ENCODE measurements at regions of chr1 and their contacts with region 1.

Region 1: GRCh38 chr1:59007820-59008598 is 224.2 kb upstream of the JUN start:
- DNase-seq: peak; percentile 53 to 60 (median 57)
- H3K4me3 ChIP-seq: no peak overlapping the region
- H3K27ac ChIP-seq: peak overlapping the region; percentile 39 to 79
- H3K4me1 ChIP-seq: peaks cover 15% of the 10 kb centered on the region
- H3K27me3 ChIP-seq: no peaks in the 10 kb centered on the region
- CTCF ChIP-seq: no peak
- EP300 ChIP-seq: no peak
- POLR2A ChIP-seq: no peak

Region 2: DNA sequence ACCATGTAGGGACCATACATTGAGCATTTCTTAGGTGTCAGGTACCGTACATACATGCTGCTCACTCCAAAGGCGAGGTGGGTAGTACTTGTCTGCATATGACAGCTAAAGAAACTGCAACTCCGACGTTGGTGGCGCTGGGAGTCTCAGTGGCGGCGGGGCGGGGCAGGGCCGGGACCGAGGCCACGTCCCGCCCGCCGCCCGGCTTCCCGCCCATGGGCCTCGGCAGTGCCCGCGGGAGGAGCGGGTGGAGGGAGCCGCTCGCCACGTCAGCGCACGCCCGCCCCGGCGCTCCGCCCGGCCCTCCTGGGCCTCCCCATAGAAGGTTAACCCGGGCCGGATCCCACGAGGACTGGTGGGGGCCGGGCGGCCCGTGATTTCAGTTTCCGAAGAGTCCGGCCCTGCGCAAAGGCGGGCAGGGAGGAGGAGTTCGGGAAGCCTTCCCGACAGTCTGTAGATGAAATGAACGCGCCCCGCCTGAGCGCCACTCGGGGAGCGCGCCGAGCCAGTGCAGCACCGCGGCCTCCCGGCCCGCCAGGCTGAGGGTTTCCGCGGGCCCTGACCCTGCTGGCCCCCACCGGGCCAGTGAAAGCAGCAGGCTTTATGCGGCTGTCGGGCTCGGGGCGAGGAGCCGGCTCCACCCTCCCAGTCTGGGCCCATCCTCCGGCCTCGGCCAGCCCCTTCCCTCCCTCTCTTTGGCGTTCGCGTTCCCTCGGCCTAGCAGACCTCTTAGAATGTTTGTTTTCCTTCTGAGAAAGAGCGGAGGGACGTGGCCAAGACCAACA is 104.3 kb before region 1 on chr1:
- intact Hi-C with region 1: loop called in 1 of 4 experiments (anchors 5 kb)
- DNase-seq: peak; percentile 92 to 96 (median 93)
- H3K4me3 ChIP-seq: peak overlapping the region; percentile 46
- H3K27ac ChIP-seq: peak overlapping the region; percentile 92 to 95
- H3K4me1 ChIP-seq: peaks cover 8% of the 10 kb centered on the region
- H3K27me3 ChIP-seq: no peaks in the 10 kb centered on the region
- CTCF ChIP-seq: no peak
- EP300 ChIP-seq: peak; percentile 54
- POLR2A ChIP-seq: peak; percentile 88

Region 3: GRCh38 chr1:59061876-59062275 is 53.9 kb after region 1 on chr1:
- intact Hi-C with region 1: loop called in 1 of 4 experiments (anchors 10 kb)
- DNase-seq: peak; percentile 29 to 66 (median 46)
- H3K4me3 ChIP-seq: no peak overlapping the region
- H3K27ac ChIP-seq: peak overlapping the region in 1 of 2 donors; percentile 2
- H3K4me1 ChIP-seq: peaks cover 15% of the 10 kb centered on the region
- H3K27me3 ChIP-seq: no peaks in the 10 kb centered on the region
- CTCF ChIP-seq: no peak
- EP300 ChIP-seq: no peak
- POLR2A ChIP-seq: peak; percentile 37